Heart right ventricle (tissue), 16 donors: ENCODE measurements at regions of chr7 and their contacts with region 1.

Region 1: DNA sequence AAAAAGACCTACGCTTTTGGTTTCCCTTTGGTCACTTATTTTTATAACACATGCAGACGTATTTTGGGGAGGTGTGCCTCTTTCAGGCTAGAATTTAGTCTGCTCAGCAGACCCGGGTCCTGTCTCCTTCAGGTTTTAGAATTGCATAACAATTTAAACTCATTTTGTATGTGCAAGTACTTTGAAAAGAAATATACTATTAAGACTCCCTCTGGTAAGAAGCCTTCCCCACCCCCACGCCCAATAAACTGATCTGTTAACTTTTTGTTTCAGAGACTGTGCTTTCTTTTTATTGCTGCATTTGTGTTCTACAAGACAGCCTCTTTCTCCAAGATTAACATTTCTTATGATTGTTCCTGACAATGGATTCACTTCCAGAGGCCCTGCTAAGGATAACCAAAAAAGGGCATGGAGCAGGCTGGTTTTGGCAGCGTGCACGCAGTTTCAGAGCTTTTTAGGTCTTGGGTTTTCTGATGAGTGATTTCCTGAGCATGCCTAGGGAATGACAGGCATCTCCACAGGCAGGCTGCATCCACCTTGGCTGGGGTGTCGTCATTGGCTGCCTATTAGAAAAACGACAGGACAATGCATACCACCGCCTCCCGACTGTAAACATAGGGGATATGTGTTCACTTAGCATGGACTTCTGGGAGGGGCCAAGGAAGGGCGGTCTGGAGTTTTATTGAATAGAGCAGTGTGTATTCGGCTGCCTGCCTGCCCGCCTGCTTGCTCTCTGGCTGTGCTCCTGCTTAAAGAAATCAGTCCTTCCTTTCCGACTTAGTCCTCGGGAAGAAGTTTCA is at the start of gene CALD1:
- DNase-seq: peak; percentile 53 to 85
- ATAC-seq: peak; percentile 90 to 95 (median 92)
- H3K4me3 ChIP-seq: peak within 1 kb of the TSS; percentile 50 to 80 (median 68)
- H3K27ac ChIP-seq: peak within 1 kb of the TSS; percentile 75 to 97 (median 90)
- H3K4me1 ChIP-seq: peaks cover 6 to 59% (median 39%) of the 10 kb centered on the region in 9 donors
- H3K27me3 ChIP-seq: no peaks in the 10 kb centered on the region
- CTCF ChIP-seq: no peak
- total RNA-seq, gene CALD1: 96.6 to 180 (median 132) TPM

Region 2: GRCh38 chr7:134831862-134832261 is 52.7 kb after region 1 on chr7:
- intact Hi-C with region 1: loop called in 3 of 10 experiments (anchors 5 kb)
- DNase-seq: peak; percentile 44 to 50
- ATAC-seq: peak in 3 of 8 donors; percentile 28 to 47 (median 29)
- H3K4me3 ChIP-seq: peak overlapping the region in 4 of 10 donors; percentile 4 to 21 (median 14)
- H3K27ac ChIP-seq: peak overlapping the region in 7 of 10 donors; percentile 34 to 83 (median 59)
- H3K4me1 ChIP-seq: peaks cover 2 to 99% (median 65%) of the 10 kb centered on the region in 9 donors
- H3K27me3 ChIP-seq: no peaks in the 10 kb centered on the region
- CTCF ChIP-seq: no peak

Region 3: DNA sequence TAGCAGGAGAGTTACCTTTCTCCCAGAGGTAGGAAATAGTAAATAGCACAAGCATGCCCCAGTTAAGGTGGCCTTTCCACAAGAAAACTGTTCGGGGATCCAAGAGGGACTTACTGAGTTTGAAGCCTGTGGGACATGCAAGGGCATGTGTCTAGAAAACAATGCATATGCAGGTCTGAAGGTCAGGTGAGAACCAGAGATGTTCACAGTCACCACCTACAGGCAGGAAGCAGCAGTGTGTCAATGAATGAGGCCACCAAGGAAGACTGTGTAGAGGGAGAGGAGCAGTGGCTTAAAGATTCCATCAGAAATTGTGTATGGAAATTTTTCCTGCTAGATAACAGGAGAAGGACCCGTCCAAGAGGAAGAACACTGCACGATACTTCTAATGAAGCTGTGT is 66.3 kb after region 1 on chr7:
- intact Hi-C with region 1: loop called in 2 of 10 experiments (anchors 5 to 10 kb)
- DNase-seq: no peak
- ATAC-seq: no peak
- H3K4me3 ChIP-seq: no peak overlapping the region
- H3K27ac ChIP-seq: peak overlapping the region in 1 of 10 donors; percentile 27
- H3K4me1 ChIP-seq: peaks cover 8 to 87% (median 58%) of the 10 kb centered on the region in 9 donors
- H3K27me3 ChIP-seq: no peaks in the 10 kb centered on the region
- CTCF ChIP-seq: peak in 6 of 9 donors; percentile 10 to 38 (median 15)

Region 4: GRCh38 chr7:134865001-134865845 is 86.1 kb after region 1 on chr7:
- intact Hi-C with region 1: loop called in 1 of 10 experiments (anchors 5 kb)
- DNase-seq: no peak
- ATAC-seq: peak; percentile 53 to 77 (median 72)
- H3K4me3 ChIP-seq: peak overlapping the region in 7 of 10 donors; percentile 17 to 38 (median 32)
- H3K27ac ChIP-seq: peak overlapping the region; percentile 25 to 85 (median 68)
- H3K4me1 ChIP-seq: peaks cover 0 to 63% (median 40%) of the 10 kb centered on the region in 9 donors
- H3K27me3 ChIP-seq: no peaks in the 10 kb centered on the region
- CTCF ChIP-seq: no peak

Region 5: GRCh38 chr7:134891262-134891695 is 112.1 kb after region 1 on chr7:
- intact Hi-C with region 1: loop called in 4 of 10 experiments (anchors 5 to 10 kb)
- DNase-seq: peak; percentile 74 to 90
- ATAC-seq: peak; percentile 89 to 95 (median 92)
- H3K4me3 ChIP-seq: peak overlapping the region; percentile 15 to 64 (median 54)
- H3K27ac ChIP-seq: peak overlapping the region; percentile 71 to 89 (median 84)
- H3K4me1 ChIP-seq: peaks cover 6 to 74% (median 49%) of the 10 kb centered on the region in 9 donors
- H3K27me3 ChIP-seq: peaks cover 0 to 11% (median 0%) of the 10 kb centered on the region in 7 donors
- CTCF ChIP-seq: no peak

Region 6: GRCh38 chr7:134932707-134933370 is 153.7 kb after region 1 on chr7:
- intact Hi-C with region 1: loop called in 1 of 10 experiments (anchors 10 kb)
- DNase-seq: peak; percentile 53 to 54
- ATAC-seq: peak; percentile 56 to 85 (median 80)
- H3K4me3 ChIP-seq: peak overlapping the region in 5 of 10 donors; percentile 2 to 16 (median 8)
- H3K27ac ChIP-seq: peak overlapping the region in 9 of 10 donors; percentile 41 to 81 (median 67)
- H3K4me1 ChIP-seq: peaks cover 0 to 81% (median 54%) of the 10 kb centered on the region in 9 donors
- H3K27me3 ChIP-seq: no peaks in the 10 kb centered on the region
- CTCF ChIP-seq: no peak

Region 7: DNA sequence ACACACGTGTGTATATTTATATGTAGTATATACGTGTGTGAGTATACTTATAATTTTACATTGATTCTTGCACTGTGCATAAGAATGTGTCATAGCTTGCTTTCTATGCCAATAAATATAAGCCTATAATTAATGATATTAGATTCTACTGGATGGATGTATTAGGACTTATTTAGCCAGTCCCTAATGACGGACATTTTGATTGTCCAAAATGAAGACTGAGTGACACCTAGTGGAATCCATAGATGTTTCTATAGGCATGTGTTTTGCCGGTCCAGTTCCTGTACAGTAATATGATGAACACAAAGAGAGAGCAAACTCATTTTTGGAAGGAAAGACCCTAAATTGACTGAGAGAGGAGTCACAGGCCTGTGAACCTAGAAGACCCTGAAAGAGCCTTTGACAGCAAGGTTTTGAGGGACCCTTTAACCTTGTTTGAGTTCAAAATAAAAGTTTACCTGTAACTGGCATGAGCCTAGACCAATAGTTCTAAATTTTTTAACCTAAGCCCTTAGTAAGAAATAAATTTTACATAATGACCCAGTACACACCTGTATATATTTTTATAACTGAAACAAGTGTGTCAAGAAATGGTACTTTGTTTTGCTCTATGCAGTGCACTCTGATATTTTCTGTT is 164.7 kb after region 1 on chr7:
- intact Hi-C with region 1: loop called in 2 of 10 experiments (anchors 5 to 10 kb)
- DNase-seq: no peak
- ATAC-seq: peak in 3 of 8 donors; percentile 53 to 60 (median 56)
- H3K4me3 ChIP-seq: no peak overlapping the region
- H3K27ac ChIP-seq: peak overlapping the region in 2 of 10 donors; percentile 16 to 17
- H3K4me1 ChIP-seq: peaks cover 0 to 22% (median 17%) of the 10 kb centered on the region in 9 donors
- H3K27me3 ChIP-seq: no peaks in the 10 kb centered on the region
- CTCF ChIP-seq: peak in 7 of 9 donors; percentile 34 to 66 (median 51)